Kidney (tissue), 22 donors: ENCODE measurements at regions of chr15 and their contacts with region 1.

Region 1: GRCh38 chr15:73081321-73081958 is 29.2 kb downstream of the NEO1 start:
- DNase-seq: peak in 3 of 5 donors; percentile 21 to 86 (median 64)
- H3K4me3 ChIP-seq: no peak overlapping the region
- H3K27ac ChIP-seq: no peak overlapping the region
- H3K4me1 ChIP-seq: peaks cover 0 to 20% (median 8%) of the 10 kb centered on the region in 3 donors
- H3K27me3 ChIP-seq: no peaks in the 10 kb centered on the region
- CTCF ChIP-seq: peak; percentile 64

Region 2: GRCh38 chr15:72796515-72797337 is 284.7 kb before region 1 on chr15:
- intact Hi-C with region 1: loop called (anchors 10 kb)
- DNase-seq: peak; percentile 51 to 77 (median 72)
- H3K4me3 ChIP-seq: peak overlapping the region; percentile 38 to 68 (median 41)
- H3K27ac ChIP-seq: no peak overlapping the region
- H3K4me1 ChIP-seq: no peaks in the 10 kb centered on the region
- H3K27me3 ChIP-seq: no peaks in the 10 kb centered on the region
- CTCF ChIP-seq: peak; percentile 47